Activated T-helper 1 cell treated with anti-CD3 and anti-CD28 coated beads, Interleukin-12 subunit alpha, Interleukin-12 subunit beta, Interleukin-2, Interleukin-4 antibody, amounts not matched to agents 30 ng/mL and 10 ng/mL and 1 ng/mL, durations not matched to agents 14 hours and 24 hours and 36 hours (primary cell): ENCODE measurements at regions of chr4 and their contacts with region 1.

Region 1: DNA sequence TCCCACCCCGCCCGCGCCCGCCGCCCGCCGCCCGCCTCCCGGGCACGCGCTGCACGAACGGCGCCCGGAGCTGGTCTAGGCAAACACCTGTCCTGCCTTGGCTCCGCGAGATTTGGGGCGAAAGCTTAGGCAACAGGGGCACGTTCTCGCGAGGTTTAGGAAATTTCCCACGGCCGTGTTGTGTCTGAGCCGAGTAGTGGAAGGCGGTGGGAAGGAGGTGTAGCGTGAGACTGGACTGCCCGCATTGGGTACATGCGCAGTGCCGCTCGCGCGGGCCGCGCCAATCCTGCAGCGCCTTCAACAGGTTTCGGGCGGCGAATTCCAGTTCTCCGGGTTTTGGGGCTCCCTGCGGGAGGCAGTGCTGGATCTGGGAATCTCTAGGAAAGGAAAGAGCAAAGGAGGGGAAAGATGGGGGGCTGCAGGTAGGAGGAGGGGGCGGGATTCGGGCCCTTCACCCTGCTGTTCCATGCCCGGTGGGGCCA is 1.3 kb upstream of the RBPJ start:
- DNase-seq: peak; percentile 98
- H3K4me3 Mint-ChIP-seq: peak overlapping the region; percentile 94
- H3K27ac Mint-ChIP-seq: peak overlapping the region; percentile 100
- H3K4me1 Mint-ChIP-seq: peaks cover 33% of the 10 kb centered on the region
- H3K27me3 Mint-ChIP-seq: peaks cover 2% of the 10 kb centered on the region

Region 2: DNA sequence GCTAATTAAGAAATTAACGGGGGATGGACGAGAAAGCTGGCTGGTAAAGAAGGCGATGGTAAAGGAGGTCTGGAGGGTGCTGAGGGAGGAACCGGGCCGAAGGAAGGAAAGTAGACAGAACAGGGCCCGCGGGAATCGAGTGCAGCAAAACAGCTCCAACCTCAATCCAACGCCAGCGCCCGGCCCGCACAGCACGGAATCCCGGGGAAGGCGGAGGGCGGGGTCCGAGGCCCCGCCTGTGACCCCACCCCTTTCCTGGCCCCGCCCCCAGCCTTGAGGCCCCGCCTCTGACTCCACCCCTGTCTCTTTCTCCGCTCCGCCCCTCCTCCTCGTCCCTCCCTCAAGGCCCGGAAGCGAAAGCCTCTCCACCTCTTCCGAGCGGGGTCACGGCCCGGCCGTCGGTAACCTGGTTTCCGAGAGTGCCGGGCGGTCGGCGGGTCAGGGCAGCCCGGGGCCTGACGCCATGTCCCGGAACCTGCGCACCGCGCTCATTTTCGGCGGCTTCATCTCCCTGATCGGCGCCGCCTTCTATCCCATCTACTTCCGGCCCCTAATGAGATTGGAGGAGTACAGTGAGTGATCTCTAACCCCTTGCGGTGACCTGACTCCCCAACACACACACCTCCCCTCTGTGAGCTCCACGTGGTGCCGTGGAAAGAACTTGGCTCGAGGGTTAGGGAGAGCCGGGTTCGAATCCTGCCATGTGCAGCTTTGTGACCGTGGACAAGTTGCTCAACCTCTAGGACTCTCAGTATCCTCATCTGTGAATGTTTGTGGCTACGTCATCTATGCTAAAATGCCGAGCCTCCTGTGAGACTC is 405.4 kb before region 1 on chr4 and contains the start of gene SMIM20:
- intact Hi-C with region 1: loop called (anchors 1 kb)
- DNase-seq: peak; percentile 88
- H3K4me3 Mint-ChIP-seq: peak within 1 kb of the TSS; percentile 94
- H3K27ac Mint-ChIP-seq: peak within 1 kb of the TSS; percentile 99
- H3K4me1 Mint-ChIP-seq: peaks cover 24% of the 10 kb centered on the region
- H3K27me3 Mint-ChIP-seq: peaks cover 5% of the 10 kb centered on the region
- total RNA-seq, gene SMIM20: 19.2 and 21.5 TPM in 2 replicates

Region 3: GRCh38 chr4:26088433-26088928 is 231.0 kb before region 1 on chr4:
- intact Hi-C with region 1: loop called (anchors 1 kb)
- DNase-seq: peak; percentile 34
- H3K4me3 Mint-ChIP-seq: peak overlapping the region; percentile 71
- H3K27ac Mint-ChIP-seq: peak overlapping the region; percentile 94
- H3K4me1 Mint-ChIP-seq: peaks cover 68% of the 10 kb centered on the region
- H3K27me3 Mint-ChIP-seq: no peaks in the 10 kb centered on the region

Region 4: GRCh38 chr4:26179316-26179760 is 140.2 kb before region 1 on chr4:
- intact Hi-C with region 1: loop called (anchors 1 kb)
- DNase-seq: no peak
- H3K4me3 Mint-ChIP-seq: no peak overlapping the region
- H3K27ac Mint-ChIP-seq: peak overlapping the region; percentile 64
- H3K4me1 Mint-ChIP-seq: peaks cover 44% of the 10 kb centered on the region
- H3K27me3 Mint-ChIP-seq: no peaks in the 10 kb centered on the region

Region 5: DNA sequence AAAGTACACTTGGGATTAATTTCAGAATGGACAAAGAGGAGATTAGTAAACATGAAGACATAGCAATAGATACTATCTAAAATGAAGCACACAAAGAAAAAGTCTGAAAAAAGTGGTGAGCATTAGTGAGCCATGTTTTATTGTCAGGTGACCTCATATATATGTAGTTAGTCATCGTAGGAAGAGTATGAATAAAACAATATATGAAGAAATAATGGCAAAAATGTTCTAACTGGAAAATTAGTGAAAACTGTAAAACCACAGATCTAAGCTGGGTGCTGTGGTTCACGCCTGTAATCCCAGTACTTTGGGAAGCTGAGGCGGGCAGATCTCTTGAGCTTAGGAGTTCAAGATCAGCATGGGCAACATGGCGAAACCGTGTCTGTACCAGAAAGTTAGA is 69.2 kb after region 1 on chr4:
- intact Hi-C with region 1: no loop called
- DNase-seq: no peak
- H3K4me3 Mint-ChIP-seq: no peak overlapping the region
- H3K27ac Mint-ChIP-seq: peak overlapping the region; percentile 42
- H3K4me1 Mint-ChIP-seq: peaks cover 34% of the 10 kb centered on the region
- H3K27me3 Mint-ChIP-seq: no peaks in the 10 kb centered on the region

Region 6: GRCh38 chr4:26746802-26747213 is 427.3 kb after region 1 on chr4:
- intact Hi-C with region 1: loop called (anchors 10 kb)
- DNase-seq: peak; percentile 19
- H3K4me3 Mint-ChIP-seq: no peak overlapping the region
- H3K27ac Mint-ChIP-seq: peak overlapping the region; percentile 35
- H3K4me1 Mint-ChIP-seq: peaks cover 18% of the 10 kb centered on the region
- H3K27me3 Mint-ChIP-seq: peaks cover 27% of the 10 kb centered on the region